OCI-LY7 (cell line): ENCODE measurements at regions of chr3 and their contacts with region 1.

Region 1: GRCh38 chr3:39180546-39181346 is 11.6 kb downstream of the XIRP1 start:
- DNase-seq: peak; percentile 67
- H3K4me3 ChIP-seq: peak overlapping the region; percentile 55
- H3K27ac ChIP-seq: no peak overlapping the region
- H3K4me1 ChIP-seq: peaks cover 30% of the 10 kb centered on the region
- CTCF ChIP-seq: no peak

Region 2: DNA sequence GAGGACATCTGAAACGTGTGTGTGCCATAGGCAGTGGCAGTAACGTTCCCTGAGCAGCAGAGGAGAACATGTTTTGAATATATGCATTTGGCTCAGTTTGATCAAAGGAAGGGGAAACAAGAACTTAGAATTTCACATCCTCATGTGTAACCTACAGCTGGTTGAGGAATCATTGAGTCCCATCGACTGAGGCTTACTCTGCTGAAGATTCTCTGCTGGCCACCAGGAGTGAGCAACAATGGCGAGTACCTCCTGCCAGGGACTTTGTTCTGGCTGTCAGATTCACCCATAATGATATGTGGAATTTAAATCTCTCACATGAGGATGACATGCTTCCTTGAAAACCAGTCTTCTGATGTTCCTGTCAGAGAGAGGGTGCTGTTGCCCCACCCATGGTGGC is 94.6 kb before region 1 on chr3:
- CTCF ChIA-PET with region 1: no interaction called
- POLR2A ChIA-PET with region 1: interaction called, 3 read pairs
- intact Hi-C with region 1: loop called (anchors 5 kb)
- DNase-seq: peak; percentile 91
- H3K4me3 ChIP-seq: peak overlapping the region; percentile 30
- H3K27ac ChIP-seq: peak overlapping the region; percentile 84
- H3K4me1 ChIP-seq: peaks cover 29% of the 10 kb centered on the region
- CTCF ChIP-seq: peak; percentile 64

Region 3: GRCh38 chr3:39101022-39101689 is 79.6 kb before region 1 on chr3:
- CTCF ChIA-PET with region 1: no interaction called
- POLR2A ChIA-PET with region 1: interaction called, 4 read pairs
- intact Hi-C with region 1: loop called (anchors 2 kb)
- DNase-seq: peak; percentile 71
- H3K4me3 ChIP-seq: no peak overlapping the region
- H3K27ac ChIP-seq: peak overlapping the region; percentile 9
- H3K4me1 ChIP-seq: peaks cover 45% of the 10 kb centered on the region
- CTCF ChIP-seq: peak; percentile 89

Region 4: DNA sequence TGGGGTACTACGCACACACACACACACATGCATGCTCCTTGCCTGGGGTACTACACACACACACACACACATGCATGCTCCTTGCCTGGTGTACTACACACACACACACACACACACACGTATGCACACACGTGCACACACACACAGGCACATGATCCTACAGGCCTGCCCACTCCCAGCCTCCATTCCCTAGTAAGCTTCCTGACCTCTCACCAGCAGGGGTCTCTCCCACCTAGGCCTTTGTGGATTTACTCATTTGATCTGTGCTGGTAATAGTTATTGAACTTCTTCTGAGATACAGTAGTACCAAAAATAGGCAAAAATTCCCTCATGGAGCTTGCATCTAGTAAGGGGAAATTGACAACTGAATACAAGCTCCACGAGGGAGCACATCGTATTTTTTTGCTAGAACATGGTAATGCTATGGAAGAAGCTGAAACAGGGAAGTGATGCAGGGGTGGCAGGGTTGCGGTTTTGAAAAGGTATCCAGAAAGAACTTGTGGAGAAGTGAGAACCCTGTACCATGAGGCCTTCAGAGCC is 54.1 kb before region 1 on chr3:
- CTCF ChIA-PET with region 1: interaction called, 3 read pairs
- POLR2A ChIA-PET with region 1: interaction called, 3 read pairs
- intact Hi-C with region 1: loop called (anchors 2 kb)
- DNase-seq: peak; percentile 48
- H3K4me3 ChIP-seq: no peak overlapping the region
- H3K27ac ChIP-seq: no peak overlapping the region
- H3K4me1 ChIP-seq: peaks cover 65% of the 10 kb centered on the region
- CTCF ChIP-seq: peak; percentile 79

Region 5: GRCh38 chr3:39146984-39147591 is 33.7 kb before region 1 on chr3:
- CTCF ChIA-PET with region 1: interaction called, 5 read pairs
- POLR2A ChIA-PET with region 1: interaction called, 7 read pairs
- intact Hi-C with region 1: loop called (anchors 1 kb)
- DNase-seq: peak; percentile 59
- H3K4me3 ChIP-seq: peak overlapping the region; percentile 79
- H3K27ac ChIP-seq: peak overlapping the region; percentile 90
- H3K4me1 ChIP-seq: peaks cover 72% of the 10 kb centered on the region
- CTCF ChIP-seq: no peak

Region 6: DNA sequence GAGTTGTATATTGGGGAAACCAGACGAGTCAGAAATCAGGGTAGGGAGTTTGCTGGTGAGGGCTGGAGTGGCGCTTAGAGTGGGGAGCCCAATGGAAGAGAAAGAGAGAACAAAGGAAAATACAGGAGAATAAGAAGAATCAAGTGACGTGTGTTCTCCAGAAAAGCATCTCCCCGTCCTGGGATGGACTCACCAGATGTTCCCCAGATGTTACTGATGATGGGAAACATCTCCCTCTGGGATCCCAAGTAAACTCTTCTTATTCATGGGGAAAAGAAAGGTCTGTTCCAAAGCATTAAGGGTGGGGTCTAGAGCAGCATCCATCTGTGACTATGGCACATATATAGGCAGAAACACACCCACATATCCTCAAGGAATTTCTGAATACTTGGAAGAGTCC is 24.3 kb before region 1 on chr3:
- CTCF ChIA-PET with region 1: no interaction called
- POLR2A ChIA-PET with region 1: interaction called, 10 read pairs
- intact Hi-C with region 1: no loop called
- DNase-seq: no peak
- H3K4me3 ChIP-seq: no peak overlapping the region
- H3K27ac ChIP-seq: no peak overlapping the region
- H3K4me1 ChIP-seq: peaks cover 13% of the 10 kb centered on the region
- CTCF ChIP-seq: no peak